SK-N-SH (cell line): ENCODE measurements at regions of chr11 and their contacts with region 1.

Region 1: GRCh38 chr11:8964324-8965320 is at the start of gene TMEM9B:
- DNase-seq: peak; percentile 95
- H3K4me3 ChIP-seq: peak within 1 kb of the TSS; percentile 68 to 93
- H3K27ac ChIP-seq: peak within 1 kb of the TSS; percentile 83 to 96
- H3K4me1 ChIP-seq: peaks cover 3 to 13% of the 10 kb centered on the region in 2 experiments; a peak in 2 of 4 replicates
- H3K27me3 ChIP-seq: no peaks in the 10 kb centered on the region
- CTCF ChIP-seq: no peak
- EP300 ChIP-seq: no peak
- RAD21 ChIP-seq: peak; percentile 17; the same call in 1 of the 2 replicates
- polyA plus RNA-seq, gene TMEM9B: 21.8 and 29.3 TPM in 2 replicates

Region 2: GRCh38 chr11:8911029-8911826 is 53.4 kb before region 1 on chr11 and contains the start of gene AKIP1:
- CTCF ChIA-PET with region 1: interaction called, 23 read pairs
- POLR2A ChIA-PET with region 1: interaction called, 3 read pairs
- DNase-seq: peak; percentile 99
- H3K4me3 ChIP-seq: peak within 1 kb of the TSS; percentile 77 to 90
- H3K27ac ChIP-seq: peak within 1 kb of the TSS; percentile 88 to 89
- H3K4me1 ChIP-seq: peaks cover 17 to 30% of the 10 kb centered on the region in 2 experiments
- H3K27me3 ChIP-seq: no peaks in the 10 kb centered on the region
- CTCF ChIP-seq: no peak
- EP300 ChIP-seq: no peak
- RAD21 ChIP-seq: no peak
- polyA plus RNA-seq, gene AKIP1: 47.9 and 55.3 TPM in 2 replicates

Region 3: GRCh38 chr11:8917157-8917825 is 47.3 kb before region 1 on chr11:
- CTCF ChIA-PET with region 1: interaction called, 23 read pairs
- POLR2A ChIA-PET with region 1: no interaction called
- DNase-seq: no peak
- H3K4me3 ChIP-seq: no peak overlapping the region
- H3K27ac ChIP-seq: peak overlapping the region; percentile 61 to 74
- H3K4me1 ChIP-seq: peaks cover 16 to 20% of the 10 kb centered on the region in 2 experiments
- H3K27me3 ChIP-seq: no peaks in the 10 kb centered on the region
- CTCF ChIP-seq: 0 out of 2 replicates have a peak, but pooled peaks have one; percentile 15
- EP300 ChIP-seq: peak in 1 of 2 experiments; percentile 57; a peak in 1 of 4 replicates
- RAD21 ChIP-seq: no peak

Region 4: DNA sequence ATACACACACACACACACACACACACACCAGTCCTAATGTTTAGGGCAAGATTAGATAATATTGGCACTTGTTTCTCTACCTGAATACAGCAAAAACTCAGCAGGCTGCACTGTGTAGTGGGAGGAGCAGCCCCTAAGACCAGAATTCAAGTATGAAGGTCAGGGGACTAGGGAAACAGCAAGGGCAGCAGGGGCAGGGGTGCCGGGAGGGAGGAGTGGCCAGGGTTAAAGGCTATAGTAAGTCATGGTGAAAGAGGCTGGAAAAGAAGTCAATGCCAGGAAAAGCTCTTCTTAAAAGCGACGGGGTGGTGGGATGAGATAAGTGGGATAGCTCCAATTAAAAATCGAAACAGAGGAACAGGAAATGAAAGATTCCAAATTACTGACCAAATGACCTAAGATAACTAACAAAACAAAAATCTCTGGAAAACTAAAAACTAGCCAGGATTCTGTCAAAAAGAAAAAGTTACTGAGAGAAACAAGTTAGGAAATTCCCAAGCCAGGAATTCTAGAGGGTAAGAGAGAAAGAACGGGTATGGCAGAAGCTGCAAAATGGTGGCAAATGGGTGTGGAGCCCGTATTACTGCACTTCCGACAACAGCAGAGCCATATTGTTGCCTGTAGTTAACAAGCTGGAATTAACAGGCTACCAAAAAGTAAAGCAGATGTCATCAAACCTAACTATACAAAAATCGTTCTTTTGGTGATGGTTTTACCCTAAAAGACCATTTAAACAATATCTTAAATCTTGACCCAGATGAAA is 23.1 kb before region 1 on chr11:
- CTCF ChIA-PET with region 1: interaction called, 12 read pairs
- POLR2A ChIA-PET with region 1: no interaction called
- DNase-seq: no peak
- H3K4me3 ChIP-seq: no peak overlapping the region
- H3K27ac ChIP-seq: no peak overlapping the region
- H3K4me1 ChIP-seq: no peaks in the 10 kb centered on the region; a peak in 2 of 4 replicates
- H3K27me3 ChIP-seq: no peaks in the 10 kb centered on the region
- CTCF ChIP-seq: no peak
- EP300 ChIP-seq: no peak
- RAD21 ChIP-seq: no peak

Region 5: DNA sequence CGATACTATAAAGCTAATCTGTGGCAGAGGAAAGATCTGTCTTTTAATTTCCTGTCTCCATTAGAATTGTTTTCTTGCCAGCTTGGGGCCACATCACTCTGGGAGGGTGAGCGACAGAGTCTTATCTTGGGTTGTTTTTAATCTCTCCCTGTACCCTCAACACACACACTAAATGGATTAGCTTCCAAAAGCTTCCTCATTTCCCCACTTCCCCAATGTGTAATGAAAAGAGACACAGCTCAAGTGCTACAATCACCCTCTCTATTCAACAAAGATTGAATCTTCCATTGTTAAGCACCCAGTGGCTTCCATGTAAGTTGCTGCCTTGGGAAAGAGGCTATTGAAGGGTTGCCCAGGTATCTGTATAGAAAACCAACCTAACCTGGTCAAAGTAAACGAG is 15.7 kb before region 1 on chr11:
- CTCF ChIA-PET with region 1: interaction called, 17 read pairs
- POLR2A ChIA-PET with region 1: no interaction called
- DNase-seq: no peak
- H3K4me3 ChIP-seq: no peak overlapping the region
- H3K27ac ChIP-seq: no peak overlapping the region; a peak in 1 of 4 replicates
- H3K4me1 ChIP-seq: no peaks in the 10 kb centered on the region
- H3K27me3 ChIP-seq: no peaks in the 10 kb centered on the region
- CTCF ChIP-seq: no peak
- EP300 ChIP-seq: no peak
- RAD21 ChIP-seq: no peak